ENCODE measurements at regions of chr14 and their contacts with region 1.

Region 1: DNA sequence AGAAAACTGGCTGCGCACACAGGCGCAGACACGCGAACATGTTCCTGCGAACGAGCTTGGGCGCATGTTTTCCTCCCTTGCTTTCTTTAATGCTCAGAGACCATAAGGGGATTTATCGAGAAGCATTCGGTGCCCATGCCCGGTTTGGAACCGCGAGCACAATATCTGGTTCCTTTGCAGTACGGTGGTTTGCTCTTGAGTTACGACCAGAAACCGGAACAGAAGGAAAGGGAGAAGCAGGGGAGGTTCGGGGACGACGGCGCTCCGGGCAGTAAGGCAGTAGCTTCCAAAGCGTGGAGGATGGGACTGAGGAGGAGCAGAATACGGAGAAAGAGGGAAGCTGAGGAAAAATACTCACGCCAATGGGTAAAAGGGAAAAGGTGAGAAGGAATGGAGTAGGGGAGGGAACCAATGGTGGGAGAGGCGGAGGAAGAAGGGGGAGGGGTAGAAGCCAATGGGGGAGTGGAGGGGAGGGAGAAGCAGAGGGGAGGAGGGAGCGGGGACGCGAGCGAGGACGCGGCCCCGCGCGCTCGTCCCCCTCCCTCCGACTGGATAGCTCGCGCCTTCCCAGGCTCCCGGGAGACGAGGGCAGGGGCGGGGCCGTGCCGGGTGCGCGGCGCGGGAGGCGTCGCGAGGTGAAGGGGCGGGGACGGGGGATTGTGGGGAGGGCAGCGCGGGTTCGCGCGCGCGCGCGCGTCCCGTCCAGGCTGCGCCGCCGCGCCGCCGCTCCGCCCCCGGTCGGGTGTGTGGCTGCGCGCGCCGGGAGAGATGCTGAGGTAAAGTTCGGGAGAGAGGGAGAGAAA is 625 bp upstream of the ARHGAP5 start:
- DNase-seq: peak; percentile 98
- H3K4me3 ChIP-seq: peak overlapping the region; percentile 63 to 99 (median 71)
- H3K27ac ChIP-seq: peak overlapping the region; percentile 92
- H3K4me1 ChIP-seq: no peaks in the 10 kb centered on the region
- H3K27me3 ChIP-seq: no peaks in the 10 kb centered on the region
- CTCF ChIP-seq: no peak

Region 2: DNA sequence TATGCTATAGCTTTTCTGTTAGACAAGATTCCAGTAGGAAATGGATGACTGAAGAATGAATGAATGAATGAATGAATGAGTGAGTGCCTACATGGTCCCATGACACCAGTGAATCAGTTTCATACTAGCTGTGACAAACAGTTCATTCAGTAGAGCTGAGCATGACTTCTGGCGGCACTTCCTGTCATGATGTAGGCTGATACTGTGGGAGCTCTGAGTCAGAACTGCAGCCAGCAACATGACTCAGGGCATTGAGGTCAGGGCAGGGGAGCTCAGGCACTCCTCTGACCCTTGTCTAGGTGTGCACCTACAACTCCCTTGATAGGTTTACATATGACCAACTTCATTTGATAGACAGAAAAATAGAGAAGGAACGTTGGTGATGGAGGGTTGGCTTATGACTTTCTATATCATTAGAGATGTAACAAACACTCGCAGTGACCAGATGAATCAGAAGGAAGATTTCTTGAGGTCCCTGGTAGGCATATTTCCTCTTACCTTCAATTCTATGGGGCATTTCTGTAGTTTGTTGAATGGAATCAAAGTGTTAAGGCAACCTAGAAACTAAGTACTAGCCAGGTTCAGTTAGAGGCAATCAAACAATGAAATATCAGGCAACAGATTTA is 138.6 kb before region 1 on chr14:
- CTCF ChIA-PET with region 1: no interaction called
- dilution Hi-C with region 1: no loop called
- in situ Hi-C with region 1: loop called in 1 of 2 experiments (anchors 10 kb)
- intact Hi-C with region 1: loop called (anchors 1 kb)
- DNase-seq: peak; percentile 99
- H3K4me3 ChIP-seq: no peak overlapping the region
- H3K27ac ChIP-seq: peak overlapping the region; percentile 93
- H3K4me1 ChIP-seq: peaks cover 21% of the 10 kb centered on the region
- H3K27me3 ChIP-seq: no peaks in the 10 kb centered on the region
- CTCF ChIP-seq: no peak

Region 3: DNA sequence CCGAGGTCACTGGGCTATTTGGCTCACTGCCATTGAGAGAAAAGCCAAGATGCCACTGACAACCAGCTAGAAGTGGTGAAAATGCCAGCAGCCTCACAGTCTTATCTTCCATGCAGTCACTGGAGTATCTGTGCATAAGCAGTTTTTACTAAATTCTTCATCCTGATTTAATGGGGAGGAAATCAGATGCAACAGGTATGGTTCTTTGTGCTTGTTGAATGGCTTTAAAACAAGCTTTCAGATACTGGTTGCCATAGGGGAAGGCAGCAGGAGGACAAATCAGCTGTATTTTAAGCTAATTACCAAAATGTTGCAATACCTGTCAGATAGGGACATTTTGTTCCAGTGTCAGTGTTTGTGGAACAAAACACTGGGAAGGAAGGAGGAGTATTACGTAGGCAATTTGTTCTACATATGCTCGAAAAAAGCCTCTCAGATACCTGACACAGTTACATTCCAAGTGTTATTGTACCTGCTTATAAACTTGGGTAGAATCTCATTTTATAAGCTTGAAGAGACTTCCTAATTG is 53.5 kb before region 1 on chr14:
- CTCF ChIA-PET with region 1: no interaction called
- dilution Hi-C with region 1: no loop called
- in situ Hi-C with region 1: no loop called
- intact Hi-C with region 1: no loop called
- DNase-seq: no peak
- H3K4me3 ChIP-seq: no peak overlapping the region
- H3K27ac ChIP-seq: no peak overlapping the region
- H3K4me1 ChIP-seq: peaks cover 33% of the 10 kb centered on the region
- H3K27me3 ChIP-seq: no peaks in the 10 kb centered on the region
- CTCF ChIP-seq: no peak

Region 4: DNA sequence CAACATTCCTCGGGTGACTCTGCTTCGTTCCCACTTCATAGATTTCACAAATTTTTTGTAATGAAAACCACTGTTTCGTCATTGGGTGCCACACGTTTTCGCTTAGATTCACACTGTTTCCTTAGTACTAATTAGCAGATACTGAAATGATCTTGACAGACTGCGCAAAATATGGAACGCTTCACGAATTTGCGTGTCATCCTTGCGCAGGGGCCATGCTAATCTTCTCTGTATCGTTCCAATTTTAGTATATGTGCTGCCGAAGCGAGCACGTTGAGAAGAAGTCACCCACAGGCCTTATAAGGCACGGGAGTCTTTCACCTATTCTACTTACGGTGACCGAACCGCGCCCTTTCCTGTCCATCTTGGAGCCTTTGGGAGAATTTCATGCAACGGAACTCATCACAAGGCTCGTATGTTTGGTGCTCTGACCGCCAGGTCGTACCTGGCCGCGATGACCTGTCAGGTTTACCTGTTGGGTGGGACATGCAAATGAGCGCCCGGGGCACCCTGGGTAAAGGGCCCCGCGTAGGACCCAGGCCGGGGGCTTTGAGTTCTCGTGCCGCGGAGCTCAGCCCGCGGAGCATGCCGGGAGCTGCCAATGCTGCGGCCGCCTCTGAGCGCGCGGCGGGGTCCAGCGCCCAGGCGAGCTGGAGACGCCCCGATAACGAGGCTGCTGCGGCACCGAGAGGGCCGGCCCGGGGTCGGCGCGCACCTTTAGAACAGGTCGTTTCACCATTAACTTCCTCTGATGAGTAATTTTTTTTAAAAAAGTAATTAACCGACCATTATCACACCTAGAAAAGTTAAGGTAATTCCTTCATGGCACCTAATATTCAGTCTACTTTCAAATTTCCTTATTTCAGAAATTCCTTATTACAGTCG is 126.8 kb after region 1 on chr14 and contains the start of gene RNU6-8:
- CTCF ChIA-PET with region 1: no interaction called
- dilution Hi-C with region 1: no loop called
- in situ Hi-C with region 1: no loop called
- intact Hi-C with region 1: loop called (anchors 2 kb)
- DNase-seq: peak; percentile 79
- H3K4me3 ChIP-seq: peak within 1 kb of the TSS; percentile 68 to 74 (median 74)
- H3K27ac ChIP-seq: peak within 1 kb of the TSS; percentile 91
- H3K4me1 ChIP-seq: peaks cover 38% of the 10 kb centered on the region
- H3K27me3 ChIP-seq: no peaks in the 10 kb centered on the region
- CTCF ChIP-seq: no peak
- total RNA-seq, gene RNU6-8: not detected

Region 5: DNA sequence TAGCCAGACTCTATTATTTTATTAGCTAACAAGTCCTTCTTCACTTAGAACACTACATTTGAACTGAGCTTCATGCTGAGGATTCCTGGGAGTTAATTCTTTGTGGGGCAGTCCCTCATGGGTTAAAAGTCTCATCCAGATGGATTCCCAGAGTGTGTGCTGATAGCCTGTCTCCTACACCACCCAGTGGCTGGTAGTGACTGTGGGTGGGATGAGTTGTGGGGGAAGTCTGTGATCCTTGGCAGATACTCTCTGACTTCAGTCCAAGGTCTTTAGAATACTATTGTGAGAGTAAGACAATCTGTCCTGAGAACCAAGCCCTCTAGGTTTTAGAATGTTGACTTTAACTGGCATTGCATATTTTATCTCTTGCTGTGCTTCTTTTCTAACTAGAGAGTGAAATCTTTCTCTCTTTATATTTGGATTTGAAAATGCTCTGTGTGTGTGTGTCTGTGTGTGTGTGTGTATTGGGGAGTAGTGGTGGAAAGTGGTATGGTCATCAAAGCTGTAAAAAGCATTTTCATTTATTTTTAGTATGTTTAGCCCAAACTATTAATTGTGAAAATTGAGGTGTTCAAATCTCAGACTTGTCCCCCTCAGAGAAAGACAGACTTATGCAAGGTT is 289.9 kb after region 1 on chr14:
- CTCF ChIA-PET with region 1: no interaction called
- dilution Hi-C with region 1: no loop called
- in situ Hi-C with region 1: loop called in 1 of 2 experiments (anchors 10 kb)
- intact Hi-C with region 1: no loop called
- DNase-seq: no peak
- H3K4me3 ChIP-seq: no peak overlapping the region
- H3K27ac ChIP-seq: no peak overlapping the region
- H3K4me1 ChIP-seq: peaks cover 24% of the 10 kb centered on the region
- H3K27me3 ChIP-seq: no peaks in the 10 kb centered on the region
- CTCF ChIP-seq: peak; percentile 6 to 24

Region 6: DNA sequence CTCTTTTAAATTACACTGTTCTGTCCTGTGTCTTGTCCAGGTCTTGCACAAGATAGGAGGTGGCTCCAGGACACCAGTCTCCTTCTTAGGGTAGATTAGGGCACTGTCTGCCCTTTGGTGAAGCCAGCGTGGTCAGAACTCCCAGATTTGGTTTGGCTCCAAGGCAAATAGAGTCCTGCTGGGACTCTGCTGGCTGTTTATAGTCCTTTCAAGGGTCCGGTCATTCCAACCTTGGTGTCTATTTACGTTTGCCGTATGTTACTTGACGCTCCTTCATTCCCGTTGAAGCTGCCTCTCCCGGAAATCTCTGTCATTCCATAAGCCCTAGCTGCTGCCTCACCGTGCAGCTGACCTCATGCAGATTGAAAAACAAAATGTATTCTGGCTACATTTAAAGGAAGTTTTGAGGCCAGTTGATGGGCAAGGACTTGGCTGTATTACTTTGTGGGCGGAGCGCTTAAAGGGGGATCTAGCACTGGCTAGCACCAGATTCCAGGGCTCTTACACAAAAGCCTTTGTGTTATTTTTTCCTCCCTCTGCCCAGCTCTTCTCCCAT is 433.2 kb after region 1 on chr14:
- CTCF ChIA-PET with region 1: no interaction called
- dilution Hi-C with region 1: no loop called
- in situ Hi-C with region 1: no loop called
- intact Hi-C with region 1: loop called (anchors 1 kb)
- DNase-seq: peak; percentile 93
- H3K4me3 ChIP-seq: peak overlapping the region in 1 of 3 experiments; percentile 10
- H3K27ac ChIP-seq: peak overlapping the region; percentile 87
- H3K4me1 ChIP-seq: peaks cover 41% of the 10 kb centered on the region
- H3K27me3 ChIP-seq: no peaks in the 10 kb centered on the region
- CTCF ChIP-seq: no peak